BJ (cell line): ENCODE measurements at regions of chr20 and their contacts with region 1.

Region 1: DNA sequence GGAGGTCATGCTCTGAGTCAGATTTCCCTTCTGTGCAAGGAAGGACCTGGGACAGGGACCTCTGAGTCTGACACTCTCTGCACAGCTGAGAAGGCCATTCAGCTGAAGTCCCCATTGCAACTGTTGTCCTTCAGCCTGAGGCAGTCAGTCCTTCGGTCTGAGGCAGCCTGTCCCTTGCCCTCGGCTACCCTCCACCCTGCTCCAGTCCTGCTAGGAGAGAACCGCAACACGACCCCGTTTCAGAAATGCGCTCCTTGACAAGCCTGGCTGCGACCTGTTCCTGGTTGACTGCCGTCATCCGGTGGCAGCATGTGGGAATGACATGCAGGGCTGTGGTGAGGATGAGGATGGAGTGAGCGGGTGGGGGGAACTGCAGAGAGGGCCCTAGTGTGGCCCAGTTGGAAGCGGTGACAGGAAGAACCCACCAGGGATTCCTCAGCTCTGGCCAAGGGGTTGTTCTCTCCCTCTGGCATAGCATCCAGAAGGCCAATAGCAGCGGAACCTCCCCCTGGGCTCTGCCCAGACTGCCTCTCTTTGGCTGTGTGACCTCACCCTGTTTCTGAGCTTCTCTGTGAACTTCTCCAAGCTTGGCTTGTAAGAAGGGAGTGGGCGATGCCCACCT is 40.3 kb upstream of the ANGPT4 start:
- DNase-seq: no peak
- H3K4me3 ChIP-seq: no peak overlapping the region
- H3K27me3 ChIP-seq: peaks cover 2% of the 10 kb centered on the region; the same call in 1 of the 2 replicates
- CTCF ChIP-seq: peak; percentile 97

Region 2: GRCh38 chr20:815914-816606 is 140.4 kb before region 1 on chr20:
- CTCF ChIA-PET with region 1: interaction called, 318 read pairs
- POLR2A ChIA-PET with region 1: no interaction called
- DNase-seq: no peak
- H3K4me3 ChIP-seq: no peak overlapping the region
- H3K27me3 ChIP-seq: no peaks in the 10 kb centered on the region
- CTCF ChIP-seq: peak; percentile 97

Region 3: DNA sequence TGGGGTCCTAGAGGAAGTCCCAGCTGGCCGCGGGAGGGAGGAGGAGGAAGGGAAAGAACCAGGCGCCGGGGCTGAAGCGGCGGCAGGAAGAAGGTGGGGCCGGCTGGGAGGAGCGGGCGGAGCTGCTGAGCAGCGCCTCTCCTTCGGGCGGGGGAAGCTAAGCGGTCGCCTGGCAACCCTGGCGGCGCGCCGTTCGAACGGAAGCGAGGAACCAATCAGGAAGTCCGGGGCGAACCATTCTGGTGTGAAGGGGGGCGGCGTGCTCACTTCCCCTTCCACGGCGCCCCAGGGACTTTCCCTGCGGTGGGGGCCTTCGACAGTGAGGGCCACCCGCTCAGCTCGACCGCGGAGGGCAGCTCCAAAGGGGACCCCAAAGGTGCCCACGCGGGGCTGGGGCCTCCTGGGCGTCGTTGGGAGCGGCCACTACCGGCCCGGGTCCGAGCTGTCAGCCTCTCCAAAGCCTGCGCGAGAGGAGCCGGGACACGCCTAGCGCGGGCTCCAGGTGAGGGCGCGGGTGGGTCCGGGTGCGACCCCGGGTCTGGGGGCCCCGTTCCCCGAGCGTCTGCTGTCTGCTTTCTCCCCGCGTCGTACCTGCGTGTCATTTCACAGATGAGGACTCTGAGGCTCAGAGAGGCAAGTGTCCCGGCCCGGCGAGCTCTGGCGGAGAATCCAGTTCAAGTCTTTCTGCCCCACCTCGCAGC is 122.8 kb before region 1 on chr20 and contains the start of gene FAM110A:
- CTCF ChIA-PET with region 1: interaction called, 52 read pairs
- POLR2A ChIA-PET with region 1: no interaction called
- DNase-seq: peak; percentile 59
- H3K4me3 ChIP-seq: peak within 1 kb of the TSS; percentile 81
- H3K27me3 ChIP-seq: no peaks in the 10 kb centered on the region
- CTCF ChIP-seq: no peak
- polyA plus RNA-seq, gene FAM110A: 2.9 and 4.2 TPM in 2 replicates

Region 4: DNA sequence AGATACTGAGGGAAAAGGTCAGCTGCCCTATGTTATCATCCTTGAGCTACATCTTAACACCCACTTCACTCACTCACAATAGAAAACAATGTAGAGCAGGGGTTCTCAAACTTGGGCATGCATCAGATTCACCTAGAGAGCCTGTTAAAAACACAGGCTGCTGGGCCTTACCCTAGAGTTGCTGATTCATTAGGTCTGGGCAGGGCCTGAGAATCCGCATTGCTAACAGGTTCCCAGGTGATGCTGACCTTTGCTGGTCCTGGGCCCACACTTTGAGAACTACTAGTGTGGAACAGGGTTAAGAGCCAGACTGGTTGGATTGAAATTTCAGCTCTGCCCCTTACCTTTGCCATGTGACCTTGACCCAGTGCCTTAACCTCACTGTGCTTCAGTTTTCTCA is 20.6 kb after region 1 on chr20:
- CTCF ChIA-PET with region 1: interaction called, 33 read pairs
- POLR2A ChIA-PET with region 1: no interaction called
- DNase-seq: no peak
- H3K4me3 ChIP-seq: no peak overlapping the region
- H3K27me3 ChIP-seq: no peaks in the 10 kb centered on the region
- CTCF ChIP-seq: no peak